Sigmoid colon (tissue), 7 donors: ENCODE measurements at regions of chr6 and their contacts with region 1.

Region 1: GRCh38 chr6:10609995-10610688 is 84.3 kb downstream of the C6orf52 start:
- DNase-seq: peak; percentile 89
- H3K4me3 ChIP-seq: no peak overlapping the region
- H3K27ac ChIP-seq: peak overlapping the region; percentile 57 to 80 (median 70)
- H3K4me1 ChIP-seq: peaks cover 0 to 56% (median 45%) of the 10 kb centered on the region in 4 donors
- H3K27me3 ChIP-seq: no peaks in the 10 kb centered on the region
- CTCF ChIP-seq: no peak
- EP300 ChIP-seq: no peak
- POLR2A ChIP-seq: no peak

Region 2: DNA sequence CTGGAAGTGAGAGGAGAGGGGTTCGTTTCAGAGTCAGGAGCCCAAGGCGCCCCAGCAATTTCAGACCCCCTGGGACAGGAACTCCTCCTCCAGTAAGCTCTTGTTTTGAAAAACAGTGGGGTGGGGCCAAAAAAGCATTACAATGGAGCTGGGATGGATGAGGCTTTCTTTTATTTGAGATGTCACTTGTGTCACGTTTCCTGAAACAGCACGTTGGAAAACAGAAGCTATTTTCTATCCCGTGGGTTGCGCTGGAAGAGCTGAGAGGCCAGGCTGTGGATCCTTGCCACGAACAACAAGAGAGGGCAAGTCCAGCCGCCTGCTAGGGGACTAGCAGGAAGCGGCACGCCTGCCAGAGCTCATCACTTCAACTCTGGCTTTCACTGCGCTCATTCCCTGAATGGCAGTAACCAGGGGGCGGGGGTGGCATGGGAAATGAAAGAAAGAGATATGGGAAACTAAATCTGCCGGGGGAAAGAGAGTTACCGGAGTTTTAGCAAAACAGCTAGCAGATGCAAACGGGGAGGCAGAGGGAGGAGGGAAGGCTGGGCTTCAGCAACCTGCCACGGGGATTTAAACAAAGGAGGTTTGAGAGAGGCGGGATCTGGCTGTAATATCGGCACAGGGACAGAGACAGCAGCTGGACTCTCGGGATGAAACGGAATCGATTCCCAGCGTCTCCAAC is 54.4 kb before region 1 on chr6:
- intact Hi-C with region 1: loop called (anchors 5 kb)
- DNase-seq: peak; percentile 84
- H3K4me3 ChIP-seq: peak overlapping the region; percentile 41 to 54 (median 50)
- H3K27ac ChIP-seq: peak overlapping the region; percentile 81 to 87 (median 85)
- H3K4me1 ChIP-seq: peaks cover 0 to 59% (median 36%) of the 10 kb centered on the region in 4 donors
- H3K27me3 ChIP-seq: no peaks in the 10 kb centered on the region
- CTCF ChIP-seq: no peak
- EP300 ChIP-seq: no peak
- POLR2A ChIP-seq: peak in 1 of 2 donors; percentile 27

Region 3: DNA sequence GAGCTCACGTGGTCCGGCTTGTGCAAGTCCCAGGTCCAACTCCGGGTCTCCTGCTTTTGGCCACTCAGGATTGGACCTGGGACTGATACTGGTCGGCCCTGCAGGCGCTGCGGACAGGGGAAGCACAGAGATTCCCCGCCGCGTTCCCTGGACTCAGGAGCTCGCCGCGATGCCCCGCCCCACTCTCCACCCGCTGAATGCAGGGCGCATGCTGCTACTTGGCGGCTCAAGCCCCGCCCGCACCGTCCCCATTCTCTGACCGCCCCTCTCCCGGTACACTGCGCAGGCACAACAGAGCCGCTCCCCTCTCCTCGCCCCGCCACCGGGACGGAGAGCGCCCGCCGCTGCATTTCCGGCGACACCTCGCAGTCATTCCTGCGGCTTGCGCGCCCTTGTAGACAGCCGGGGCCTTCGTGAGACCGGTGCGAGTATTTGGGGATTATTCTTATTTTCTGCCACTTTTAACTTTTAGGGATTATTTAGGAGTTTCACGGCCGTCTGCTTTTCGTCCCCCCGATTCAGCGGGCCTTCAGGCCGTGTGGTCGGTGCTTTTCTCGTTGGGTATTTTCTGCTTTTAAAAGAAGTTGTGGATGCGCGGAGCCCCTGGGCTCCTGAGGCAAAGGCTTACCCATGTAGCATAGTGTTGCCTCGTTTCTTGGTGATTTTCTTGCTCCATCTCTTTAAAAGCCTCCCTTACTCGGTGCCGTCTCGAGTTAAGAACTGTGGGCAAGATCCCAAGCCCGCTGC is 112.9 kb after region 1 on chr6 and contains the start of gene TMEM14C:
- intact Hi-C with region 1: loop called (anchors 10 kb)
- DNase-seq: peak; percentile 100
- H3K4me3 ChIP-seq: peak within 1 kb of the TSS; percentile 74 to 85 (median 79)
- H3K27ac ChIP-seq: peak within 1 kb of the TSS; percentile 91 to 94 (median 93)
- H3K4me1 ChIP-seq: peaks cover 0 to 36% (median 28%) of the 10 kb centered on the region in 4 donors
- H3K27me3 ChIP-seq: no peaks in the 10 kb centered on the region
- CTCF ChIP-seq: no peak
- EP300 ChIP-seq: peak in 1 of 4 donors; percentile 15
- POLR2A ChIP-seq: peak; percentile 80 to 87
- total RNA-seq, gene TMEM14C: 115 to 199 (median 170) TPM